AG04450 (cell line): ENCODE measurements at regions of chr5 and their contacts with region 1.

Region 1: GRCh38 chr5:932628-933250 is 40.1 kb downstream of the TRIP13 start:
- DNase-seq: no peak
- H3K4me3 ChIP-seq: no peak overlapping the region
- H3K27ac ChIP-seq: no peak overlapping the region
- H3K27me3 ChIP-seq: peaks cover 28% of the 10 kb centered on the region
- CTCF ChIP-seq: no peak

Region 2: DNA sequence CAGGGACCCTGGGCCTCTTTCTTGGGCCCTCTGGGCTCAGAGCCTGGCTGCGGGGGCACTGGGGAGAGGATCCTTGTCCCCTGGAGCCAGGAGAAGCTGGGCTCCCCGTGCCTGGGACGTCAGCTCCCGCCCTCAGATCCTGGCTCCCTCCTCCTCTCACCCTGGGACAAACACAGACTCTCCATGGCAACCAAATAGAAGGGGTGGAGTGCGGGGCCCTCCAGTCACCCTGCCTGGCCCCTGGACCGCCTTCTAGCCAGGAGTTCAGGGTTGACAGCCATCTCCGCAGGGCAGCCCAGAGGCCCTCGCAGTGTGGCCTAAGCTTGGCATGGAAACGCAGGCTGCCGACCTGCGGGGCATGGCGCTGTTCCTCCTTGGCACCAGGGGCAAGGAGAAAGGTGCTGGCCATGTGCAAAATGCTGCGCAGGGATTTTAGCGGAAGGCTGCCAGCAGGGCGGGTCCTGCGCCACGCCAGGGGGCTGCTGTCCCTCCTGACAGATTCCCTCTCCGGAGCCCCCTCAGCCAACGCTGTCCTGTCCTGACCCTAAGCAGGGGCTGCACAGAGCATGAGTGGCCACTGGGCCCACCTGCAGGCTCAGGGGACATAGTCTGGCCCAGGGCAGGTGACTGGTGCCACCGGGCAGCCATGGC is 83.0 kb before region 1 on chr5:
- CTCF ChIA-PET with region 1: no interaction called
- POLR2A ChIA-PET with region 1: no interaction called
- DNase-seq: no peak
- H3K4me3 ChIP-seq: no peak overlapping the region
- H3K27ac ChIP-seq: no peak overlapping the region
- H3K27me3 ChIP-seq: peaks cover 14% of the 10 kb centered on the region
- CTCF ChIP-seq: no peak

Region 3: GRCh38 chr5:945691-946551 is 13.2 kb after region 1 on chr5:
- CTCF ChIA-PET with region 1: no interaction called
- POLR2A ChIA-PET with region 1: no interaction called
- DNase-seq: no peak
- H3K4me3 ChIP-seq: no peak overlapping the region
- H3K27ac ChIP-seq: no peak overlapping the region
- H3K27me3 ChIP-seq: peaks cover 73% of the 10 kb centered on the region
- CTCF ChIP-seq: no peak

Region 4: DNA sequence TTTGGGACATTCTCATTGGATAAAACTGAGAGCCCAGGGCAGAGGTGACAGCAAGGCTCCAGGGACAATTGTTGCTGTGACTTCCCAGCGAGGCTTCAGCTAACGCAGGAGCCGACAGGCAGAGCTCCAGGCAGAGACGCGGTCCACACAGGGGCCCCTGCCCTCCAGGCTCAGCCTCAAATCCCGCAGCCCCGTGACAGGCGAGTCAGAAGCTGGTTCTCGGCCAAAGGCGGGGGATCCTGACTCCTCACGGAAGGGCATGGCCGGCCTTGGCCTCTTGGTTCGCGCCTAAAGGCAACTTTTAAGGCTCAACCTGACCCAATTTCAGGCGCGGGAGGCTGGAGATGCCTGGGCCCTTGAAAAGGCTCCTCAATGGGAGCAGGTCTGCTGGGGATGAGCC is 157.8 kb after region 1 on chr5:
- CTCF ChIA-PET with region 1: no interaction called
- POLR2A ChIA-PET with region 1: no interaction called
- DNase-seq: no peak
- H3K4me3 ChIP-seq: no peak overlapping the region
- H3K27ac ChIP-seq: no peak overlapping the region
- H3K27me3 ChIP-seq: peaks cover 3% of the 10 kb centered on the region
- CTCF ChIP-seq: no peak

Region 5: DNA sequence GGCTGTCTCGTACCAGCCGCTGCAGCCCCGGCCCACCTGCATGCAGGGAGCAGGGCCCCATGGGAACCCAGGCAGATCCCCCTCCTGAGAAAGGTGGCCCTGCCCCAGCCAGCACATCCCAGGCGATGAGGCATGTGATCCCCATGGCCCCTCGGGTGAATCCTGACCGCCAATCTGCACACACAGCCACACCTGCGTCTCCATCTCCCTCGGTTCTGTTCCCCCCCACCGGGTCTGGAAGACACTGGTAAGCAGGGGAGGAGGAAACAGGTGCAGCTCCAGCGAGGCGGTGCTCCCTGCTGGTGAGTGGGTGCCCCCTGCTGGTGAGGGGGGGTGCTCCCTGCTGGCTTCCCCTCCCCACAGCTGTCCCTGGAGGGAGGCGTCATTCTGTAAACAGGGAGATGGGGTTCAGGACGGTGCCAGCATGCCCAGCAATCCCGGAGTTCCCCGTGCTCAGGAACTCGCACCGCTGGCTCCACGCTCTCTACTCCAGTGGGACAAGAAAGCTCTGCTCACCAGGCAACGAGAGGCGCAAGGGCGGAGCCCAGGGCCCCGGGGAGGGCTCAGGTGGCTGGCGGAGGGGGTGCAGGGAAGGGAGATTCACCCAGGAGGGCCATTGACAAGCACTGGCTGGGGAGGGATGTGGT is 207.6 kb after region 1 on chr5:
- CTCF ChIA-PET with region 1: interaction called, 11 read pairs
- POLR2A ChIA-PET with region 1: no interaction called
- DNase-seq: no peak
- H3K4me3 ChIP-seq: no peak overlapping the region
- H3K27ac ChIP-seq: no peak overlapping the region
- H3K27me3 ChIP-seq: peaks cover 3% of the 10 kb centered on the region
- CTCF ChIP-seq: peak; percentile 54

Region 6: GRCh38 chr5:1174122-1174936 is 241.6 kb after region 1 on chr5:
- CTCF ChIA-PET with region 1: interaction called, 10 read pairs
- POLR2A ChIA-PET with region 1: no interaction called
- DNase-seq: no peak
- H3K4me3 ChIP-seq: no peak overlapping the region
- H3K27ac ChIP-seq: no peak overlapping the region
- H3K27me3 ChIP-seq: no peaks in the 10 kb centered on the region
- CTCF ChIP-seq: peak; percentile 49